ENCODE measurements at regions of chr12 and their contacts with region 1.

Region 1: GRCh38 chr12:125183187-125184067 is 118.2 kb downstream of the AACS start:
- DNase-seq: peak; percentile 66
- H3K4me3 Mint-ChIP-seq: no peak overlapping the region
- H3K27ac Mint-ChIP-seq: no peak overlapping the region
- H3K4me1 Mint-ChIP-seq: peaks cover 5% of the 10 kb centered on the region
- H3K27me3 Mint-ChIP-seq: peaks cover 49% of the 10 kb centered on the region
- CTCF ChIP-seq: peak; percentile 99

Region 2: DNA sequence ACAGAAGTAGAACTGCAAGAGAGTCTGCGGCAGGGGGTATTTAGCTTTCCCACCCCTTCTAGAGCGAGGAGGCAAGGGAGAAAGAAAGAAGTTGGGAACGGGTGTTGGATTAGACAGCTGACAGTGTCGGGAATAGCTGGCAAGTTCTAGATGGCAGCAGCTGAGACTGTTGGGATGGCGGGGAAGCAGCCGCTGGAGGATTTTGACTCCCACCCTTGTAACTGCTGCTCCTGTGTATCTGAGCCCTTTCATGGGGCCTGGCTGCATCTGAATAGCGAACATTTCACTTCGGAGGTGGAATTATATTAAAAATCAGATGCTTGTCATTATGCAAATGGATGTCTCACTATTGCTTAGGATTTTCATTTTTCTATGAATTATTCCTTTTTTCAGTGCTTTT is 13.6 kb before region 1 on chr12:
- CTCF ChIA-PET with region 1: interaction called, 22 read pairs
- POLR2A ChIA-PET with region 1: no interaction called
- intact Hi-C with region 1: no loop called
- DNase-seq: no peak
- H3K4me3 Mint-ChIP-seq: no peak overlapping the region
- H3K27ac Mint-ChIP-seq: no peak overlapping the region
- H3K4me1 Mint-ChIP-seq: no peaks in the 10 kb centered on the region
- H3K27me3 Mint-ChIP-seq: peaks cover 18% of the 10 kb centered on the region
- CTCF ChIP-seq: no peak

Region 3: GRCh38 chr12:125203145-125203765 is 19.8 kb after region 1 on chr12:
- CTCF ChIA-PET with region 1: interaction called, 30 read pairs
- POLR2A ChIA-PET with region 1: no interaction called
- intact Hi-C with region 1: no loop called
- DNase-seq: peak; percentile 34
- H3K4me3 Mint-ChIP-seq: no peak overlapping the region
- H3K27ac Mint-ChIP-seq: no peak overlapping the region
- H3K4me1 Mint-ChIP-seq: no peaks in the 10 kb centered on the region
- H3K27me3 Mint-ChIP-seq: peaks cover 78% of the 10 kb centered on the region
- CTCF ChIP-seq: peak; percentile 47

Region 4: GRCh38 chr12:125402874-125403789 is 219.7 kb after region 1 on chr12:
- CTCF ChIA-PET with region 1: interaction called, 83 read pairs
- POLR2A ChIA-PET with region 1: no interaction called
- intact Hi-C with region 1: loop called (anchors 1 kb)
- DNase-seq: peak; percentile 45
- H3K4me3 Mint-ChIP-seq: no peak overlapping the region
- H3K27ac Mint-ChIP-seq: no peak overlapping the region
- H3K4me1 Mint-ChIP-seq: no peaks in the 10 kb centered on the region
- H3K27me3 Mint-ChIP-seq: peaks cover 56% of the 10 kb centered on the region
- CTCF ChIP-seq: peak; percentile 47